ENCODE measurements at regions of chr3 and their contacts with region 1.

Region 1: GRCh38 chr3:31462050-31462569 is 70.6 kb upstream of the STT3B start:
- DNase-seq: peak; percentile 12 to 90 (median 54)
- ATAC-seq: peak; percentile 88 to 92 (median 90)
- H3K4me3 ChIP-seq: peak overlapping the region; percentile 9 to 47
- H3K4me3 Mint-ChIP-seq: peak overlapping the region; percentile 46 to 75 (median 62)
- H3K27ac ChIP-seq: peak overlapping the region; percentile 69
- H3K27ac Mint-ChIP-seq: peak overlapping the region; percentile 95 to 99
- H3K4me1 ChIP-seq: peaks cover 32 to 33% of the 10 kb centered on the region in 2 experiments
- H3K4me1 Mint-ChIP-seq: peaks cover 57 to 64% (median 62%) of the 10 kb centered on the region in 3 donors
- H3K27me3 ChIP-seq: no peaks in the 10 kb centered on the region
- H3K27me3 Mint-ChIP-seq: no peaks in the 10 kb centered on the region

Region 2: DNA sequence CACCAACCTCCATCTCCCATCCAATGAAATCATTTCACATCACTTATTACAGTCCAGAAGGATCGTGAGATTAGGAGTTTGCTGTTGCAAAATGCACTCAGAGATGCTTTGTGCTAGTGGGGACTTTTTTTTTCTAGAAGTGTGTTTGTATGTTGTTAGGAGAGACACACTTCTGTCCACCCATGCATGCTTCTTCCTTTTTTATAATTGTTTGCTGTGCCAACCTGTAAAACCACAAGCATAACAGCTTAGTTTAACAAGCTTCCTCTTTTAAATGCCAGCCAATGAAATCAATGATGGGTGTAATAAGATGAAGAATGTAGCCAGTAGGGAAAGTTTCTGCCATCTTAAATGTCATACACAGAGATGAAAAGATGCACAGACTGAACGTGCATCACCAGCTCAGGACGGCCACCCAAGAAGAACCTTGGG is 235.0 kb before region 1 on chr3:
- CTCF ChIA-PET with region 1: interaction called in 1 of 2 experiments, 10 read pairs
- POLR2A ChIA-PET with region 1: no interaction called
- DNase-seq: peak in 7 of 35 experiments; percentile 8 to 71 (median 18)
- ATAC-seq: peak; percentile 40 to 79 (median 54)
- H3K4me3 ChIP-seq: no peak overlapping the region
- H3K4me3 Mint-ChIP-seq: peak overlapping the region in 2 of 3 donors; percentile 6 to 62
- H3K27ac ChIP-seq: peak overlapping the region; percentile 92
- H3K27ac Mint-ChIP-seq: peak overlapping the region; percentile 93 to 95
- H3K4me1 ChIP-seq: peaks cover 59 to 88% of the 10 kb centered on the region in 2 experiments
- H3K4me1 Mint-ChIP-seq: peaks cover 89 to 96% (median 92%) of the 10 kb centered on the region in 3 donors
- H3K27me3 ChIP-seq: no peaks in the 10 kb centered on the region
- H3K27me3 Mint-ChIP-seq: no peaks in the 10 kb centered on the region

Region 3: DNA sequence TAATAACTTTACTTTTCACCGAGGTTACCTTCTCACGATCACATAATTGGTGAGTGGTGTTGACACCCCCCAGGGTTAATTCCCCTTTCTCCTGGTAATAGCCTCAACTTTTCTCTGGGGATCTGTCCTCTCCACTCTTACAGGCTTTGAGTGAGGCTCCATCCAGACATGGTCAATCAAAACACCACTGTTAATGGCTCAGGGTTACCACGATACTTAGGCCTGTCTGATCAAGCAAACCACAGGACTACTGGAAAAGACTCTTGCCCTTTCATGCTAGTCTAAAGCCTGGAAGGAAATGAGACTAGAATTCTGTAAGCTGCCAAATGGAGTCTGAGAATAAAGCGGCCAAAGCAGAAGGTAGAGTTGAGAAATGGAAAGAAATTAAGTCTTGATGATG is 14.1 kb after region 1 on chr3:
- CTCF ChIA-PET with region 1: no interaction called
- POLR2A ChIA-PET with region 1: no interaction called
- DNase-seq: no peak
- ATAC-seq: no peak
- H3K4me3 ChIP-seq: no peak overlapping the region
- H3K4me3 Mint-ChIP-seq: no peak overlapping the region
- H3K27ac ChIP-seq: no peak overlapping the region
- H3K27ac Mint-ChIP-seq: no peak overlapping the region
- H3K4me1 ChIP-seq: no peaks in the 10 kb centered on the region
- H3K4me1 Mint-ChIP-seq: peaks cover 9 to 16% (median 15%) of the 10 kb centered on the region in 3 donors
- H3K27me3 ChIP-seq: no peaks in the 10 kb centered on the region
- H3K27me3 Mint-ChIP-seq: no peaks in the 10 kb centered on the region

Region 4: DNA sequence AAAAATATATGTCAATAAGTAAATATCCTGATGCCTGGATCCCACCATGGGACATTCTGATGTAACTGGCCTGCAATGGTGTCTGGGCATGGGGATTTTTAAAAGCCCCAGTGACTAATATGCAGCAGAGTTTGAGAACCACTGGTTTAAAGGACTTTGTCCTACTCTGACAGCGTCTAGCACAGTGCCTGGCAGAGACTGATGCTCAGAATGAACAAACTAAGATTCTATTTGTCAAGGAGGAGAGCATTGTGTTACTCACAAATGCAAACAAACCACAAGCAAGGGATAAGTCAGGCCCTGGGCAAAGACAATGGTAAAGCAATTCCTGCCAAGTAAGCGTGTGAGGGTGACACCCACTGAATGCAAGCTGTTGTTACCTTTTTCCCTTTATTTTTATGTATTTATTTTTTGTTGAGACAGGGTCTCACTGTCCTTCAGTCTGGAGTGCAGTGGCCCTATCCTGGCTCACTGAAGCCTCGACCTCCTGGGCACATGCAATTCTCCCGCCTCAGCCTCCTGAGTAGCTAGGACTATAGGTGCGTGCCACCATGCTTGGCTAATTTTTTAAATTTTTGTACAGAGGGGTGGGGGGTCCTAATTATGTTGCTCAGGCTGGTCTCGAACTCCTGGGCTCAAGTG is 643.3 kb after region 1 on chr3:
- CTCF ChIA-PET with region 1: no interaction called
- POLR2A ChIA-PET with region 1: no interaction called
- DNase-seq: no peak
- ATAC-seq: no peak
- H3K4me3 ChIP-seq: no peak overlapping the region
- H3K4me3 Mint-ChIP-seq: peak overlapping the region; percentile 91 to 97 (median 96)
- H3K27ac ChIP-seq: no peak overlapping the region
- H3K27ac Mint-ChIP-seq: peak overlapping the region; percentile 69 to 83
- H3K4me1 ChIP-seq: peaks cover 2 to 22% of the 10 kb centered on the region in 2 experiments
- H3K4me1 Mint-ChIP-seq: peaks cover 30 to 34% (median 34%) of the 10 kb centered on the region in 3 donors
- H3K27me3 ChIP-seq: no peaks in the 10 kb centered on the region
- H3K27me3 Mint-ChIP-seq: no peaks in the 10 kb centered on the region

Region 5: GRCh38 chr3:32283304-32283703 is 821.2 kb after region 1 on chr3:
- CTCF ChIA-PET with region 1: no interaction called
- POLR2A ChIA-PET with region 1: no interaction called
- DNase-seq: no peak
- ATAC-seq: no peak
- H3K4me3 ChIP-seq: no peak overlapping the region
- H3K4me3 Mint-ChIP-seq: no peak overlapping the region
- H3K27ac ChIP-seq: no peak overlapping the region
- H3K27ac Mint-ChIP-seq: peak overlapping the region; percentile 11 to 52
- H3K4me1 ChIP-seq: peaks cover 3 to 17% of the 10 kb centered on the region in 2 experiments
- H3K4me1 Mint-ChIP-seq: peaks cover 23 to 58% (median 33%) of the 10 kb centered on the region in 3 donors
- H3K27me3 ChIP-seq: no peaks in the 10 kb centered on the region
- H3K27me3 Mint-ChIP-seq: no peaks in the 10 kb centered on the region